Activated naive CD4-positive, alpha-beta T cell treated with anti-CD3 and anti-CD28 coated beads for 36 hours (primary cell): ENCODE measurements at regions of chr4 and their contacts with region 1.

Region 1: DNA sequence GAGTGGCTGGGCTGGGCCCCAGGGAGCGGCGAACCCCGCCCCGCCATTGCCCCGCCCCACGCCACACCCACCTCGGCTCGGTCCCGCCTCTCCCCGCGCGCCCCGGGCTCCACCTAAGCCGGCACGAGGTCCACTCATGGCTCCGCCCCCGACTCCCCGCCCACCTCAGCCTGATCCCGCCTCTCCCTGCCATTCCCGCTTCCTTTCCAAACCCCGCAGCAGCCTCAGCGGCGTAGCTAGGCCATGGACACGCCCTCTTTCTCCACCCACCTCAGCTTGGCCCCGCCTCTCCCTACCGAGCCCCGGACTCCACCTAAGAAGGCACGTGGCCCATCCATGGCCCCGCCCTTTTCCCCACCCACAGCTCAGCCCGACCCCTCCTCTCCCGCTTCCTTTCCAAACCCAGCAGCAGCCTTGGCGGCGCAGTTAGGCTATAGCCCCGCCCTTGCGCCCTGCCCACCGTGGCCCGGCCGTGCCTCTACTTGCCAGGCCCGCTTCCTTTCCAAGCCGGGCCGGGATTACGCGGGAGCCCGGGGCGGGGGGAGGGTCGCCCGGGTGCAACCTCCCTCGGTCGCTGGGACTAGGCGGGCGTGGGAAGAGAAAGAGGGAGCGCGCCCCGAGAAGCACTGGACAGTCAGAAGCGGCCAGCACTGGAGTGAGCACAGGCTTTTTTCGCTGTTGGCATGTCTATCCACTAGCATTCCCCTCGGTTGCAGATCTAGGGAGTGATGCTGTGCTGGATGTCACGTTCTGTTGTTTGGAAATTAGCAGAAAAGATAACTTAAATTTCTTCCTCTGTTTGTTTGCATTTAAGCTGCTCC is at the start of gene RELL1:
- DNase-seq: peak; percentile 100
- H3K4me3 Mint-ChIP-seq: peak within 1 kb of the TSS; percentile 84
- H3K27ac Mint-ChIP-seq: peak within 1 kb of the TSS; percentile 82
- H3K4me1 Mint-ChIP-seq: peaks cover 34% of the 10 kb centered on the region
- H3K27me3 Mint-ChIP-seq: no peaks in the 10 kb centered on the region
- total RNA-seq, gene RELL1: 8.7 to 10.3 TPM

Region 2: DNA sequence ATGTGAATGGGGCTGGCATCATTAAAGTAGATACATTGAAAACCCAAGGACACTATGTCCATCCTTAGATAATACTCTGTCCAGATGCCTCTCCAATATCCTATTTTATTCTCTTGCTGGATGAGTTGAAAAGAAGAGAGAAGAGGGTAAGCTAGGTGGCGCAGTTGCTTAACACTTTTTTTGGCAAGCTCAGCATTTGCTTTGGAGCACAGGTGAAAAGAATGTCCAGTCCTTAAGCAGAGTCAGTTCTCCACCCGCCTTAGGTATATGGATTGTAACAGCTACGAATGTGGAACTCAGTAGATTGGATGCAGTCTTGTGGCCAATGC is 233.7 kb before region 1 on chr4:
- CTCF ChIA-PET with region 1: no interaction called
- intact Hi-C with region 1: loop called (anchors 1 kb)
- DNase-seq: peak; percentile 80
- H3K4me3 Mint-ChIP-seq: peak overlapping the region; percentile 69
- H3K27ac Mint-ChIP-seq: no peak overlapping the region
- H3K4me1 Mint-ChIP-seq: peaks cover 9% of the 10 kb centered on the region
- H3K27me3 Mint-ChIP-seq: peaks cover 43% of the 10 kb centered on the region

Region 3: DNA sequence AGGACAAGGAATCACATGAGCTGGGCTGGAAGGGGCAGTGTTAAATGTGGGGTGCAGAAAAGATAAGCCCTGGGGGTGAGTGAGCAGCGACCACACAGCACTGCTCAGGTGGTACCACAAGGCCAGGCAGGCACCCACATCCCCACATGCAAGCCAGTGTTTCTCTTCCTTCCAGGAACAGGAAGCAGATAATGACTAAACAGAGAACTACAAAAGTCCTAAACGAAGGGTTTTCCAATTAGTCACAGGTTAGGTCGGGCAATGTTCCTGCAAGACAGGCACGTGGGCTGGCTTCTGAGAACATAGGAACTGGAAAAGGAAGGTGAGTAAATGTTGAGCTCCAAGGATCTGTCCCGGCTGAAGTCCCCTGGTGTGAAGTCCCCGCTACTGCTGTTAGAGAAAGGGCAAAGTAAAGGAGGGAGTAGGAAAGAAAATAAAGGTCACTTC is 19.9 kb before region 1 on chr4:
- CTCF ChIA-PET with region 1: no interaction called
- intact Hi-C with region 1: loop called (anchors 2 kb)
- DNase-seq: peak; percentile 51
- H3K4me3 Mint-ChIP-seq: no peak overlapping the region
- H3K27ac Mint-ChIP-seq: peak overlapping the region; percentile 25
- H3K4me1 Mint-ChIP-seq: peaks cover 45% of the 10 kb centered on the region
- H3K27me3 Mint-ChIP-seq: no peaks in the 10 kb centered on the region

Region 4: GRCh38 chr4:37765741-37766140 is 79.2 kb after region 1 on chr4:
- CTCF ChIA-PET with region 1: no interaction called
- intact Hi-C with region 1: loop called (anchors 2 kb)
- DNase-seq: no peak
- H3K4me3 Mint-ChIP-seq: no peak overlapping the region
- H3K27ac Mint-ChIP-seq: peak overlapping the region; percentile 51
- H3K4me1 Mint-ChIP-seq: peaks cover 7% of the 10 kb centered on the region
- H3K27me3 Mint-ChIP-seq: no peaks in the 10 kb centered on the region

Region 5: GRCh38 chr4:37977471-37978247 is 291.1 kb after region 1 on chr4:
- CTCF ChIA-PET with region 1: no interaction called
- intact Hi-C with region 1: loop called (anchors 1 kb)
- DNase-seq: peak; percentile 83
- H3K4me3 Mint-ChIP-seq: peak overlapping the region; percentile 77
- H3K27ac Mint-ChIP-seq: peak overlapping the region; percentile 26
- H3K4me1 Mint-ChIP-seq: peaks cover 27% of the 10 kb centered on the region
- H3K27me3 Mint-ChIP-seq: no peaks in the 10 kb centered on the region

Region 6: GRCh38 chr4:38663801-38664705 is 977.5 kb after region 1 on chr4 and contains the start of gene KLF3:
- CTCF ChIA-PET with region 1: no interaction called
- intact Hi-C with region 1: loop called (anchors 2 kb)
- DNase-seq: peak; percentile 86
- H3K4me3 Mint-ChIP-seq: peak within 1 kb of the TSS; percentile 79
- H3K27ac Mint-ChIP-seq: peak within 1 kb of the TSS; percentile 87
- H3K4me1 Mint-ChIP-seq: peaks cover 66% of the 10 kb centered on the region
- H3K27me3 Mint-ChIP-seq: no peaks in the 10 kb centered on the region
- total RNA-seq, gene KLF3: 15.2 to 15.8 TPM